Gastrocnemius medialis (tissue), 4 donors: ENCODE measurements at regions of chr1 and their contacts with region 1.

Region 1: GRCh38 chr1:203273206-203273868 is 32.0 kb upstream of the BTG2 start:
- DNase-seq: peak; percentile 72 to 86
- ATAC-seq: peak; percentile 33 to 42
- H3K4me3 ChIP-seq: peak overlapping the region; percentile 31 to 43 (median 38)
- H3K27ac ChIP-seq: peak overlapping the region; percentile 92 to 96 (median 94)
- H3K4me1 ChIP-seq: peaks cover 82 to 83% of the 10 kb centered on the region in 2 donors
- H3K27me3 ChIP-seq: no peaks in the 10 kb centered on the region
- CTCF ChIP-seq: peak; percentile 99 to 100 (median 100)
- POLR2A ChIP-seq: peak; percentile 23 to 52

Region 2: DNA sequence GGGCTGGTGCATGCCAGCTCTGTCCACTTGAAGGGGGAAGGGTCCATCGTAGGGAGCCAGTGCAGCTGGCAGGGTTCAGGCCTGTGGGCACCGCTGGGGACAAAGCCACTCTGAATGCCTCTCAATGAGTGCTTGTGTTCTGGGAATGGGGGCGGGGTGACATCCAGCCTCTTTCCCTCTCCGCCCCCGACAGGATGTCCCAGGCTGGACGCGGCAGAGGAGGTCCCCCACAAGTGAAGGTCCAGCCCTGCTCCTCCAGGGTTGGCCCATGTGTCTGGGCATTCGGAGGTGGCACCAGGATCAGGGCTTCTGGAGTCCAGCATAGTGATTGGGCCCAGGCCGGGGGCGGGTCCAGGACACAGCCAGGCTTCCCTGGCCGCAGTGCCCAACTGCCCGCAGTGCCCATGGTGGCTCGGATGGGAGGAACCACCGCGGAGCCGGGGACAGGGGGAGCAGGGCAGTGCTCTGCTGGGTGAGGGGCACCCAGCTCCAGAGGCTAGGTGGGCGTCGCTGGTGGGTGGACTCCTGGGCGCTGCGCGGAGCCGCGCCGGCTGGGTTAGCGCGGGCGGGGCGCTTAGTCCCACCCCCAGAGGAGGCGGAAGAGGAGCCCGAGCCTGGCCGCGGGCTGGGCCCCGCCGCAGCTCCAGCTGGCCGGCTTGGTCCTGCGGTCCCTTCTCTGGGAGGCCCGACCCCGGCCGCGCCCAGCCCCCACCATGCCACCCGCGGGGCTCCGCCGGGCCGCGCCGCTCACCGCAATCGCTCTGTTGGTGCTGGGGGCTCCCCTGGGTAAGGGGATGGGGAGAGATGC is 1384.9 kb before region 1 on chr1 and contains the start of gene SHISA4:
- in situ Hi-C with region 1: no loop called
- intact Hi-C with region 1: loop called (anchors 10 kb)
- DNase-seq: peak; percentile 81 to 94
- ATAC-seq: peak; percentile 45 to 55
- H3K4me3 ChIP-seq: peak within 1 kb of the TSS; percentile 65 to 89 (median 72)
- H3K27ac ChIP-seq: peak within 1 kb of the TSS; percentile 90 to 98 (median 94)
- H3K4me1 ChIP-seq: peaks cover 82 to 85% of the 10 kb centered on the region in 2 donors
- H3K27me3 ChIP-seq: no peaks in the 10 kb centered on the region
- CTCF ChIP-seq: no peak
- POLR2A ChIP-seq: peak; percentile 95 to 97
- total RNA-seq, gene SHISA4: 76.6 to 384 (median 229) TPM

Region 3: GRCh38 chr1:203326830-203327683 is 53.7 kb after region 1 on chr1:
- in situ Hi-C with region 1: loop called in 1 of 4 experiments (anchors 5 kb)
- intact Hi-C with region 1: loop called (anchors 1 kb)
- DNase-seq: peak; percentile 86 to 87
- ATAC-seq: peak; percentile 80 to 91
- H3K4me3 ChIP-seq: peak overlapping the region; percentile 48 to 66 (median 62)
- H3K27ac ChIP-seq: peak overlapping the region; percentile 78 to 90 (median 86)
- H3K4me1 ChIP-seq: peaks cover 24 to 31% of the 10 kb centered on the region in 2 donors
- H3K27me3 ChIP-seq: no peaks in the 10 kb centered on the region
- CTCF ChIP-seq: no peak
- POLR2A ChIP-seq: peak; percentile 39 to 73

Region 4: GRCh38 chr1:203480525-203481084 is 207.3 kb after region 1 on chr1:
- in situ Hi-C with region 1: loop called (anchors 5 to 10 kb)
- intact Hi-C with region 1: no loop called
- DNase-seq: peak in 1 of 2 donors; percentile 43
- ATAC-seq: peak; percentile 17 to 45
- H3K4me3 ChIP-seq: peak overlapping the region; percentile 8 to 48 (median 28)
- H3K27ac ChIP-seq: peak overlapping the region; percentile 61 to 71 (median 68)
- H3K4me1 ChIP-seq: peaks cover 0 to 9% of the 10 kb centered on the region in 2 donors
- H3K27me3 ChIP-seq: no peaks in the 10 kb centered on the region
- CTCF ChIP-seq: no peak
- POLR2A ChIP-seq: no peak

Region 5: DNA sequence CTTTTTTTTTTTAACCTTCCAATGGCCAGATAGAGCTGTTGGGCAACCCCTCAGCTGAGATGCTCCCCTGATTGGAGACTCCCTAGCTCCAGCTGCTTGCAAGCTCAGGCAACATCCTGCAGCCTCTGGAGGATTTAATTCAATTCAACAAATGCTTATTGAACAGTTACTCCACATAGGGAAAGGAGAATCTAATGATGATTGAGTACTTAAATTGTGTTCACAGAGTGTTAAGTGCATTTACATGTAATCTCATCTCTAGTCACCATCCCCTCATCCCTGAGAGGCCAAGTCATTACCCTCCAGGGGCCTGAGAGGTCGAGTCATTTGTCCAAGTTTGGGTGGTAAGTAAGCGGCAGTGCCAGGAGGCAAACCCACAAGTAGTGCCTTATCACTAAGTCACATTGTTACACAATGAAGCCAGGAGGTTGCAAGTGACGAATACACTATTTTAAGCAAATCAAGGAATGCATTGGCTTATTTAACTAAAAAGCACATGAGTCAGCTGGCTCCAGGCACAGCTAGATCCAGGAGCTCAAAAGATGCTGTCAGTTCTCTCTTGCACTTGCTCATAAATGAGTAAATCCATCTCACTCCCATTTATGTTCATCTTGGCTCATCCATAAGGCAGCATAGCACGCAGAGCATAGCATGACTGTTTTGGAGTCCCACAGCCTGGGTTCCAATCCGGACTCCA is 284.9 kb after region 1 on chr1:
- in situ Hi-C with region 1: no loop called
- intact Hi-C with region 1: loop called (anchors 5 kb)
- DNase-seq: peak; percentile 61 to 75
- ATAC-seq: peak; percentile 87 to 92
- H3K4me3 ChIP-seq: no peak overlapping the region
- H3K27ac ChIP-seq: peak overlapping the region; percentile 81 to 88 (median 85)
- H3K4me1 ChIP-seq: peaks cover 42 to 44% of the 10 kb centered on the region in 2 donors
- H3K27me3 ChIP-seq: no peaks in the 10 kb centered on the region
- CTCF ChIP-seq: no peak
- POLR2A ChIP-seq: peak in 1 of 2 donors; percentile 24

Region 6: DNA sequence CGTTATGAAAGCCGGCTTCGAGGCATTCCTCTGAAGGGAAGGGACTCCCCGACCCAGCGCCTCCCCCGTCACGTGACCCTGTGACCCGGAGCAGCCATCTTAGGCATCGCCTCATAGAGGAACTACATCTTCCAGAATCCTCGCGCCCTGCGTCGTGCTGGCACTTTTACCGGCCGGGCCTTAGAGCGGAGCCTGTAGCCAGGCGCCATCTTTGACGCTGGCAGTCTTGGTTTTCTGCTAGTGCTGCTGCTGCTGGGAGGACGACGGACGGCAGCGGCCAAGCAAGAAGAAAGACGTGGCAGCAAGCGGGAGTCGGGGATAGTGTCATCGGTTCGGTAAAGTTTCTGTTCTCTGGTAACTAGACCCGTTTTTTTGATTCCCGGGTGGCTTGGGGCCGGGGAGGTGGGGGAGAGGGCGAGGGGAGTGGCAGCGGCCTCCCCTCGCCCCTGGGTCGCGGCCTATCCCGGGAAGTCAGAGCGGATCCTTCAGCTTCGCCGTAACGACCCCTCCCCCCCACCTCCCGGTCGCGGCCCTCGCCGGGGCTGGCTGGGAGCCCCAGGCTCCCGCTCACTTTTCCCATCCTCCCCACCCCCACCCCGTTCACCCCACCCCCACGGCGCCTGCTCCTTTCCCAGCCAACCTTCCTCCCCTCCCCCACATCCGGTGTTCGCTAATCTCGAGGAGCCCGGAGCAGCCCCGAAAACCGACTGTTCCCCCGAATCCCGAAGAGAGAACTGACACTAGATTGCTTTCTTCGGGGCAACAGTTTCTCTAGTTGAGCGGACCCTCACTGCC is 522.3 kb after region 1 on chr1 and contains the starts of genes ZBED6 and ZC3H11A:
- in situ Hi-C with region 1: no loop called
- intact Hi-C with region 1: loop called (anchors 10 kb)
- DNase-seq: peak; percentile 99
- ATAC-seq: peak; percentile 93 to 95
- H3K4me3 ChIP-seq: peak within 1 kb of the TSS; percentile 75 to 91 (median 86)
- H3K27ac ChIP-seq: peak within 1 kb of the TSS; percentile 98 to 99 (median 98)
- H3K4me1 ChIP-seq: peaks cover 41 to 47% of the 10 kb centered on the region in 2 donors
- H3K27me3 ChIP-seq: no peaks in the 10 kb centered on the region
- CTCF ChIP-seq: peak in 1 of 5 experiments; percentile 27
- POLR2A ChIP-seq: peak; percentile 82 to 94
- total RNA-seq, gene ZBED6: 9.0 to 42.5 (median 27.6) TPM
- total RNA-seq, gene ZC3H11A: 71.0 to 131 (median 92.0) TPM